MCF 10A (cell line): ENCODE measurements at regions of chr16 and their contacts with region 1.

Region 1: GRCh38 chr16:68310761-68311511 is at the starts of genes PRMT7 and SLC7A6OS:
- DNase-seq: peak; percentile 90
- H3K4me3 Mint-ChIP-seq: peak within 1 kb of the TSS; percentile 97
- H3K27ac Mint-ChIP-seq: peak within 1 kb of the TSS; percentile 87
- H3K4me1 Mint-ChIP-seq: peaks cover 16% of the 10 kb centered on the region
- H3K27me3 Mint-ChIP-seq: no peaks in the 10 kb centered on the region
- CTCF ChIP-seq: no peak
- total RNA-seq, gene PRMT7: 28.0 and 33.2 TPM in 2 replicates
- total RNA-seq, gene SLC7A6OS: 19.4 and 20.4 TPM in 2 replicates

Region 2: DNA sequence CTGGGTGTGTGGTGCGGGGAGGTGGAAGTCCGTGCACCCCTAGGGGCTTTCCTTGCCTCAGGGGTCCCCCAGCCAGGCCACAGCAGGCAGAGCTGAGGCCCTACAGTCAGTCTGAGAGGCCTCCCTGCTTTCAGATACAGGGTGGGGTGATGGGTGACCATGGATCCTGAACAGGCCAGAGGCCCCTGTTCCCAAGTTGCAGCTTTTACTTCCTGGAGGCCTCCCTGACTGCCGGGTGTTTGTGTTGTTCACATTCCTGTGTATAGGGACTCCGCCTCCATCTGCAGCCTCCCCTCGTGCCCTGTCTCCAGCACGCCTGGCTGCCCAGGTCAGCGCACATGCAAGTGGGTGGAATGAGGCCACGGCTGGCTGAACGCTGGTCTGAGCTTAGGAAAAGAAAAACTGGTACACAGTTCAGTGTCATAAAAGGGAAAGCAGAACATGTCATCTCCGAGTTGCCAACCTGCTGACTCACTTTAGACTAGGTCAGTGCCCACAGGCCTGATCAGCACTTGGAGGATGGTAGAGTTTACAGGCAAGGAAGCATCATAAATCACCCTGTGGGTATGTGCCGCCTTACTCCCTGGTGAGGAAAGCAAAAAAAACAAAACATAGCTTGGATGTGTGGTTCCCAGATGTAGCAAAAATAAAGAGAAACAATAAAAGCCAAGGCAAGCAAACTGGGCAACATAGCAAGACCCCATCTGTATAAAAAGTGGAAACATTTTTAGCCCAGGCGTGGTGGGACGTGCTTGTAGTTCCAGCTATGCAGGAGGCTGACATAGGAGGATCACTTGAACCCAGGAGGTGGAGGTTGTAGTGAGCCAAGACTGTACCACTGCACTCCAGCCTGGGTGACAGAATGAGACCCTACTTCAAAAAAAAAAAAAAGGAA is 52.8 kb before region 1 on chr16:
- CTCF ChIA-PET with region 1: interaction called, 308 read pairs
- POLR2A ChIA-PET with region 1: interaction called, 74 read pairs
- intact Hi-C with region 1: no loop called
- DNase-seq: peak; percentile 67
- H3K4me3 Mint-ChIP-seq: no peak overlapping the region
- H3K27ac Mint-ChIP-seq: peak overlapping the region; percentile 14
- H3K4me1 Mint-ChIP-seq: peaks cover 10% of the 10 kb centered on the region
- H3K27me3 Mint-ChIP-seq: no peaks in the 10 kb centered on the region
- CTCF ChIP-seq: no peak

Region 3: GRCh38 chr16:68289621-68290329 is 21.2 kb before region 1 on chr16:
- CTCF ChIA-PET with region 1: interaction called, 4 read pairs
- POLR2A ChIA-PET with region 1: interaction called, 92 read pairs
- intact Hi-C with region 1: no loop called
- DNase-seq: no peak
- H3K4me3 Mint-ChIP-seq: no peak overlapping the region
- H3K27ac Mint-ChIP-seq: no peak overlapping the region
- H3K4me1 Mint-ChIP-seq: peaks cover 23% of the 10 kb centered on the region
- H3K27me3 Mint-ChIP-seq: no peaks in the 10 kb centered on the region
- CTCF ChIP-seq: no peak

Region 4: GRCh38 chr16:68328151-68328859 is 17.4 kb after region 1 on chr16:
- CTCF ChIA-PET with region 1: interaction called, 17 read pairs
- POLR2A ChIA-PET with region 1: interaction called, 16 read pairs
- intact Hi-C with region 1: no loop called
- DNase-seq: peak; percentile 88
- H3K4me3 Mint-ChIP-seq: no peak overlapping the region
- H3K27ac Mint-ChIP-seq: no peak overlapping the region
- H3K4me1 Mint-ChIP-seq: peaks cover 10% of the 10 kb centered on the region
- H3K27me3 Mint-ChIP-seq: no peaks in the 10 kb centered on the region
- CTCF ChIP-seq: peak; percentile 91

Region 5: GRCh38 chr16:68426351-68426660 is 115.4 kb after region 1 on chr16:
- CTCF ChIA-PET with region 1: no interaction called
- POLR2A ChIA-PET with region 1: no interaction called
- intact Hi-C with region 1: no loop called
- DNase-seq: peak; percentile 47
- H3K4me3 Mint-ChIP-seq: no peak overlapping the region
- H3K27ac Mint-ChIP-seq: no peak overlapping the region
- H3K4me1 Mint-ChIP-seq: no peaks in the 10 kb centered on the region
- H3K27me3 Mint-ChIP-seq: peaks cover 18% of the 10 kb centered on the region
- CTCF ChIP-seq: no peak

Region 6: GRCh38 chr16:68490829-68491575 is 180.1 kb after region 1 on chr16:
- CTCF ChIA-PET with region 1: no interaction called
- POLR2A ChIA-PET with region 1: no interaction called
- intact Hi-C with region 1: no loop called
- DNase-seq: peak; percentile 91
- H3K4me3 Mint-ChIP-seq: no peak overlapping the region
- H3K27ac Mint-ChIP-seq: no peak overlapping the region
- H3K4me1 Mint-ChIP-seq: peaks cover 28% of the 10 kb centered on the region
- H3K27me3 Mint-ChIP-seq: no peaks in the 10 kb centered on the region
- CTCF ChIP-seq: no peak